Endothelial cell of umbilical vein (primary cell): ENCODE measurements at regions of chr2 and their contacts with region 1.

Region 1: GRCh38 chr2:101012706-101013181 is 10.7 kb downstream of the RPL31 start:
- DNase-seq: peak; percentile 56
- H3K4me3 ChIP-seq: no peak overlapping the region
- H3K27ac ChIP-seq: no peak overlapping the region
- H3K4me1 ChIP-seq: no peaks in the 10 kb centered on the region
- H3K27me3 ChIP-seq: no peaks in the 10 kb centered on the region
- CTCF ChIP-seq: peak; percentile 57 to 72
- POLR2A ChIP-seq: no peak

Region 2: GRCh38 chr2:101001691-101002561 is 10.8 kb before region 1 on chr2 and contains the start of gene RPL31:
- CTCF ChIA-PET with region 1: interaction called, 10 read pairs
- POLR2A ChIA-PET with region 1: interaction called, 8 read pairs
- dilution Hi-C with region 1: no loop called
- intact Hi-C with region 1: no loop called
- DNase-seq: peak; percentile 95
- H3K4me3 ChIP-seq: peak within 1 kb of the TSS; percentile 82 to 94 (median 90)
- H3K27ac ChIP-seq: peak within 1 kb of the TSS; percentile 76
- H3K4me1 ChIP-seq: peaks cover 24% of the 10 kb centered on the region
- H3K27me3 ChIP-seq: no peaks in the 10 kb centered on the region
- CTCF ChIP-seq: no peak
- POLR2A ChIP-seq: peak; percentile 99
- total RNA-seq, gene RPL31: 1,337 and 1,355 TPM in 2 replicates

Region 3: DNA sequence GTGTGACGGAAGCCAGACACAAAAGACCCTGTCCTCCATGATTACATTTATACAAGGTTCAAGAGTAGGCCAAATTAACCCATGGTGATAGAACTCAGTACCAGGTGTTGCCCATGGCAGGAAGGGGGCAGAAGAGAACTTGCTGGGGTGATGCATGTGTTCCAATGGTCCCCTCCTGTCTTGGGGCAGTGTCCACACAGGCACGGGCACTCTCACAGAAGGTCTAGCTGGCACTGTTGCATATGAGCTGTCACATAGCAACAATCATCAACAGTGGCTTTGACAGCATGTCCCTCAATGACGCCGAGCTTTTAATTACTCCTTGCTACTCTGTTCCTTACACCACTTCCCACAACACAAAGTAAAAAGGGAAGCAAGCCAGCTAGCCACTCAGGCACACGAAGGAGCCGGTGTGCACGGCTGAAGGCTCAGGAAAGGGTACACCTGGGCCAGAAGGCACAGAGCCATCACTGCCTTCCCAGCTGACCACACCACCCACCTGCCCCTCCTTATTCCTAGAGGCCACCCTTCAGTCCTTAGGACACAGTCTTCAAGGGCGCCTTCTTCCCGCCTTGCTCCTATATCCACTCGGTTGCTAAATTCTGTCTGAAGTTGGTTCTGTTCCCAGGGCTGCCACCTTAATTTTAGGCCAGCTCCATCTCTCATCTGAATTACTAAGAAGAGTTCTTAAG is 18.3 kb after region 1 on chr2:
- CTCF ChIA-PET with region 1: interaction called, 12 read pairs
- POLR2A ChIA-PET with region 1: no interaction called
- dilution Hi-C with region 1: no loop called
- intact Hi-C with region 1: no loop called
- DNase-seq: no peak
- H3K4me3 ChIP-seq: no peak overlapping the region
- H3K27ac ChIP-seq: no peak overlapping the region
- H3K4me1 ChIP-seq: no peaks in the 10 kb centered on the region
- H3K27me3 ChIP-seq: no peaks in the 10 kb centered on the region
- CTCF ChIP-seq: no peak
- POLR2A ChIP-seq: no peak

Region 4: GRCh38 chr2:101188683-101189405 is 176.1 kb after region 1 on chr2:
- CTCF ChIA-PET with region 1: interaction called, 33 read pairs
- POLR2A ChIA-PET with region 1: interaction called, 4 read pairs
- dilution Hi-C with region 1: no loop called
- intact Hi-C with region 1: no loop called
- DNase-seq: peak; percentile 41
- H3K4me3 ChIP-seq: no peak overlapping the region
- H3K27ac ChIP-seq: no peak overlapping the region
- H3K4me1 ChIP-seq: no peaks in the 10 kb centered on the region
- H3K27me3 ChIP-seq: peaks cover 0 to 2% of the 10 kb centered on the region in 2 experiments
- CTCF ChIP-seq: peak; percentile 74 to 78
- POLR2A ChIP-seq: no peak

Region 5: DNA sequence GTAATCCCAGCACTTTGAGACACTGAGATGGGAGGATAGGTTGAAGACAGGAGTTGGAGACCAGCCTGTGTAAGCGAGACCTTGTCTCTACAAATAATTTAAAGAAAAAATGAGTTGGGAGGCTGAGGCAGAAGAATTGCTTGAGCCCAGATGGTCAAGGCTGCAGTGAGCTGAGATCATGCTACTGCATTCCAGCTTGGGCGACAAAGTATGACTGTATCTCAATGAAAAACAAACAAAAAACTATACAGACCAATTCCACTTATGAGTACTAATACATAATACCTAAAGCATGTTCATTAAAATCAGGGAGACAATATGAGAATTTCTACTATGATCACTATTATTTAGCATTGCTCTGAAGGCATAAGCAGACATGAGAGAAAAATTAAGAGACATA is 283.2 kb after region 1 on chr2:
- CTCF ChIA-PET with region 1: no interaction called
- POLR2A ChIA-PET with region 1: no interaction called
- dilution Hi-C with region 1: no loop called
- intact Hi-C with region 1: no loop called
- DNase-seq: peak; percentile 60
- H3K4me3 ChIP-seq: no peak overlapping the region
- H3K27ac ChIP-seq: peak overlapping the region; percentile 83
- H3K4me1 ChIP-seq: peaks cover 37% of the 10 kb centered on the region
- H3K27me3 ChIP-seq: no peaks in the 10 kb centered on the region
- CTCF ChIP-seq: no peak
- POLR2A ChIP-seq: no peak